ENCODE measurements at regions of chr11 and their contacts with region 1.

Region 1: DNA sequence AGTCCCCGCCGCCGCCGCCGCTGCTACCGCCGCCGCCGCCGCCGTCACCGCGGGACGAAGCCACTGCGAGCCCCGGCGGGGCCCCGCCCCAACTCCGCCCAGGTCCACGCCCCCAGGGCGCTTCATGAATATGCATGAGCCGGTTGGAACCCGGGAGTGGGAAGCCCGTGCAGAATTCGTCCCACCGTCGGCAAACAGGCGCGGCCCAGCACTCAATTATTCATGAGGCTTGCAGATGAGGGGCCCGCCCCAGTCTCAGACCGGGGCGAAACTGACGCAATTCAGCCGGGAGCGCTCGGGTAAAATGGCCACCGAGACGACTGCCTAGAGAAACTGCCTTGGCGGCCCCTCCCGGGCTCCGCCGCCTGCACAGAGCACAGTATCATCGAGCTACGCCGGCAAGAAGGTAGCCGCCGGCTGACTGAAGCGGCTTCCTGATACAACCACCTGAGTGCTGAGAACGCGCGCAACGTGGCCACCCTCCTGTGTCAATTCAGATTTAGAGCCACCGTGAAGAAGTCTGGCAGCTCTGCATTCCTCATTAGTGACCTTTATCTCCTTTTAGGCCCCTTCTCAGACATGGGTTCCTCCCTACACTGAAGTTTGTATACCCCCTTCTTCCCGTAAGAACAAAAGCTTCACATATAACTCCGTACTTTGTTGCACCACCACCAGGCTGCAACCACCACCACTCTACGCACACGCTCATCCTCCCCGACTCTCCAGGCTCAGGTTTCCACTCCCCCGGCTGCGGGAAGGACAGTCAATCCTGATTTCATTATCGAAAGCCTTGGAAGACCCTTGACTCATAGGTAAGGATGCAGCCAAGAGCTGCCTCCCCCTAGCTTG is at the start of gene TNKS1BP1:
- DNase-seq: peak; percentile 98 to 99
- H3K4me3 ChIP-seq: peak within 1 kb of the TSS; percentile 79
- H3K4me3 Mint-ChIP-seq: peak within 1 kb of the TSS; percentile 88
- H3K27ac Mint-ChIP-seq: peak within 1 kb of the TSS; percentile 95
- H3K4me1 ChIP-seq: peaks cover 52% of the 10 kb centered on the region
- H3K4me1 Mint-ChIP-seq: peaks cover 57% of the 10 kb centered on the region
- H3K27me3 ChIP-seq: no peaks in the 10 kb centered on the region
- H3K27me3 Mint-ChIP-seq: no peaks in the 10 kb centered on the region
- CTCF ChIP-seq: no peak
- total RNA-seq, gene TNKS1BP1: 107 and 120 TPM in 2 replicates

Region 2: GRCh38 chr11:57288771-57289579 is 36.1 kb before region 1 on chr11:
- CTCF ChIA-PET with region 1: no interaction called
- POLR2A ChIA-PET with region 1: interaction called, 5 read pairs
- intact Hi-C with region 1: loop called (anchors 2 kb)
- DNase-seq: peak in 1 of 2 experiments; percentile 51
- H3K4me3 ChIP-seq: no peak overlapping the region
- H3K4me3 Mint-ChIP-seq: peak overlapping the region; percentile 34
- H3K27ac Mint-ChIP-seq: peak overlapping the region; percentile 55
- H3K4me1 ChIP-seq: peaks cover 60% of the 10 kb centered on the region
- H3K4me1 Mint-ChIP-seq: peaks cover 55% of the 10 kb centered on the region
- H3K27me3 ChIP-seq: no peaks in the 10 kb centered on the region
- H3K27me3 Mint-ChIP-seq: no peaks in the 10 kb centered on the region
- CTCF ChIP-seq: no peak

Region 3: GRCh38 chr11:57311109-57311936 is 13.8 kb before region 1 on chr11:
- CTCF ChIA-PET with region 1: interaction called, 9 read pairs
- POLR2A ChIA-PET with region 1: interaction called, 18 read pairs
- intact Hi-C with region 1: loop called (anchors 1 kb)
- DNase-seq: peak; percentile 94 to 96
- H3K4me3 ChIP-seq: peak overlapping the region; percentile 55
- H3K4me3 Mint-ChIP-seq: peak overlapping the region; percentile 72
- H3K27ac Mint-ChIP-seq: peak overlapping the region; percentile 47
- H3K4me1 ChIP-seq: peaks cover 40% of the 10 kb centered on the region
- H3K4me1 Mint-ChIP-seq: peaks cover 35% of the 10 kb centered on the region
- H3K27me3 ChIP-seq: no peaks in the 10 kb centered on the region
- H3K27me3 Mint-ChIP-seq: no peaks in the 10 kb centered on the region
- CTCF ChIP-seq: no peak

Region 4: DNA sequence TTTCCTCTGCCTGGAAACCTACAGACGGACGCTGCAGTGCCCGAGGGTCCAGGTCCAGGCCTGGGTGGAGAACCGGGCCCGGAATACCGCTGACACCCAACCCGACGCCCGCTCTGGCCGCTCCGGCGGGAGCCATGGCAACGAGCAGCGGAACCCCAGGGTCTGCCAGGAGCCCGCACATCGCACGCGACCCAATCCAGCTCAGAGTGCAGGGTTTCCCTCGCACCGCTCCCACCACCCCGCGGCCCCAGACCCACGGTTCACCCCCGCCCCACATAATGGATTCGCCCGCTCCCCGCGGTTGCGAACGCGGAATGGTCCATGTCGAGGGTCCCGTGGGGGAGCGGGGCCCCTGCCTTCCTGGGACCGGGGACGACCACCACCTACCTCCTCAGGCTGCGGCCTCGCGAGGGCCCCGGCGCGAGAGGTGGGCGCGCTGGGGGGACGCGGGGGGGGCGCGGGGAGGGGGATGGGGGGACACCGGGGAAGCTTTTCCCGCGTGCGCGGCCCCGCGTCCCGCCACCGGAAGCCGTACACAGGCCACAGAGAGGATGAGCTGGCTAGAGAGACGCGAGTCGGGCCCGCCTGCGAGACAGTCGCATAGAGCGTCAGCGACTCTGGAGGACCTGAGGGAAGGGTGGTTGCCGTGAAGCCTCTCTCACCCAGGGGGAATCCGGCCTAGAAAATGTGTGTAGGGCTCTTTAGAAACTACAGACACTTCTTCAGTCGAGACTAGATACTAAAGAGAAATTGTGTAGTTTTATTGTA is 10.4 kb after region 1 on chr11 and contains the start of gene SSRP1:
- CTCF ChIA-PET with region 1: interaction called, 7 read pairs
- POLR2A ChIA-PET with region 1: interaction called, 31 read pairs
- intact Hi-C with region 1: loop called (anchors 1 kb)
- DNase-seq: peak; percentile 90 to 92
- H3K4me3 ChIP-seq: peak within 1 kb of the TSS; percentile 65
- H3K4me3 Mint-ChIP-seq: peak within 1 kb of the TSS; percentile 79
- H3K27ac Mint-ChIP-seq: peak within 1 kb of the TSS; percentile 87
- H3K4me1 ChIP-seq: peaks cover 16% of the 10 kb centered on the region
- H3K4me1 Mint-ChIP-seq: peaks cover 22% of the 10 kb centered on the region
- H3K27me3 ChIP-seq: no peaks in the 10 kb centered on the region
- H3K27me3 Mint-ChIP-seq: no peaks in the 10 kb centered on the region
- CTCF ChIP-seq: no peak
- total RNA-seq, gene SSRP1: 206 and 212 TPM in 2 replicates